Activated CD8-positive, alpha-beta T cell treated with anti-CD3 and anti-CD28 coated beads, Interleukin-2, amount 10 ng/mL, durations not matched to agents 7 days and 5 days (primary cell): ENCODE measurements at regions of chr12 and their contacts with region 1.

Region 1: DNA sequence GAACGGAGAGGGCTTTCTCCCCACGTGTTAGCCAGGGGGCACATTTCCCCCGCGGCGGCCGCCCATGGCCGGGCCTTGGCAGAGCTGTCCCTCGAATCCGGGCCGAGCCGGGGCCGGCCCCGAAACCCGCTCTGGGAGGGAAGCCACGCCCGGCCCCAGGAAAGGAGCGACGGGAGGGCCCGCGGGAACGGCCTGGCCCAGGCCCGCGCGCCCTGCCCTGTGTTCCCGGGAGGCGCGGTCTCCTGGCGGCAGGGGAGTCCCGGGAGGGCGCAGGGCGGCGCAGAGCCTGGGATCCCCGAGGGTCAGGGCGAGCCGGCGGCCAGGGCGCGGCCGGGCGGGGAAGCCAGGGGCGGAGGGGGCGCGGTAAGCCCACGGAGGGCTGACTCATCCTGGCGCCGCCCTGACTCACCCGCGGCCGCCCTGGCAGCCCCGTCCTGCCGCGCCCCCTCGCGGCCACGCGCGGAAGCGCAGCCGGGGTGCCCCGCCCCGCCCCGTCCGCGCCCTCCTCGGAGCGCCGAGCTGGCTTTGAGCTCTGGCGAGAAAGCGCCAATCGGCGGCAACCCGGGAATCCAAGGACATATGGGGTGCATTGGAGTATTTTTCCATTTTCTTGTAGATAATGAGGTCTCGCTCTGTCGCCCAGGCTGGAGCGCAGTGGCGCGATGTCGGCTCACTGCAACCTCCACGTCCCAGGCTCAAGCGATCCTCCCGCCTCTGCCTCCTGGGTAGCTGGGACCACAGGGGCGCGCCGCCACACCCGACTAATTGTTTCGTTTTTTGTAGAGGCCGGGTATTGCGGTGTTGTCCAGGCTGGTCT is 31.8 kb upstream of the PLEKHG6 start:
- DNase-seq: peak; percentile 84
- ATAC-seq: peak; percentile 97
- H3K4me3 Mint-ChIP-seq: peak overlapping the region; percentile 71
- H3K27ac Mint-ChIP-seq: no peak overlapping the region
- H3K4me1 Mint-ChIP-seq: peaks cover 9% of the 10 kb centered on the region
- H3K27me3 Mint-ChIP-seq: peaks cover 19% of the 10 kb centered on the region

Region 2: DNA sequence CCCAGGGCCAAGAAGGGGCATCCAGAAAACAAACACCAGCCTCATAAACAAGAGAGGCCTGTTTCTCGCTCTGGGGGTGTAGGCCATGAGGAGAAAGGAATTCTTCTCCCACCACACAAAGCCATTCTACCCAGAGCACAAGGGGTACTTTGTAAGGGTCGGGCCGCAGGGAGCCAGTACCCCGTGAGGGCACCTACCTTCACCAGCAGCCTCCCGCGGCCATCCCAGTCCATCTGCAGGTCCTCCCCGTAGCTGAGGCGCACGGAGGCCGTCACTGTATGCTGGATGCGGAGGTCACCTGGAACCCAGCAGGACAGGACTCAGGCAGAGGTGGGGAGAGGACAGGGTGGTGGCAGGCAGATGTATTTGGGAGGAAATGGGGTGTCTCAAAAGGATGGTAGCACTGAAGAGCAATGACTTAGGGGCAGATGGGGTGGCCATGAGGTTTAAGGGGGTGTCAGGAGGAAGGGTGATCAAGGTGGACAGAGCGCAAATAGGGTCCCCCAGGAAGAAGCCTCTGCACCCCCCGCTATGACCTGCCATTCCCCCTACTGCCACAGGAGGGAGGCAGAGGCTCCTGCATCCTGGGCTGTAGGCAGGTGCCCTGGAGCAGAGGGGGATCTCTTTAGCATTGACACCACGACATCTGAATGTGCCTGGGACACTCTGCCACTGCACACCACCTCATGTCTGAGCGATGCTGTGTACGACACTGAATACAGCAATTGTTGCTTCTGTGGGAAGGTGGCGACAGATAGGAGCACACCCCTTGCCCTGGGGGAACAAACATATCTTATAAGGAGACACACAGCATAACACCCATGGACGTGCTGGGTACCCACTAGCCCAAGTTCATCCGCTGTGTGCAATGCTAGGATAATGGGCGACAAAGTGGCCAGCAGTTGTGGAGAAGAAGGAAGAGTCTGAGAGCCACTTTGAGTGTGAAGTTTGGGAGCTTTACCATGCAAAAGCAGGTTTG is 215.6 kb before region 1 on chr12:
- CTCF ChIA-PET with region 1: interaction called, 20 read pairs
- POLR2A ChIA-PET with region 1: no interaction called
- DNase-seq: peak; percentile 73
- ATAC-seq: peak; percentile 84
- H3K4me3 Mint-ChIP-seq: no peak overlapping the region
- H3K27ac Mint-ChIP-seq: no peak overlapping the region
- H3K4me1 Mint-ChIP-seq: no peaks in the 10 kb centered on the region
- H3K27me3 Mint-ChIP-seq: peaks cover 6% of the 10 kb centered on the region

Region 3: DNA sequence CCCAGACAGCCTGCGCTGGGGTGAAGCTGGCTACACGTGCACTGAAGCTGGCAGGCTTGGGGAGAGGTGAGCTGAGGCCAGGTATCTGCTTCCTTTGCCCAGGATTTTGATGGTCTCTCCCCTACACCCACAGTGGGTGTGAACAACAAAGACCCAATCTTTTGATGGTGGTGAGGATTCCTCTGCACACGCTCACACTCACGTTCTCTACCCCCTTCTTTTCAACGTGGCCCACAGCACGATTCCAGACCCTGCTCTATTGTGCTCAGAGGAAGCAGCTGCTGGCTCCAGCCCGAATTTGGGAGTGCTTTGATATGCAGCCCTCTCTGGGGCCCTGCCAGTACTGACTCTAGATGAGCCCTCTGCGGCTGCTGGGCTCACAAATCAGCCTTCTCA is 73.5 kb before region 1 on chr12:
- CTCF ChIA-PET with region 1: interaction called, 21 read pairs
- POLR2A ChIA-PET with region 1: no interaction called
- DNase-seq: no peak
- ATAC-seq: no peak
- H3K4me3 Mint-ChIP-seq: no peak overlapping the region
- H3K27ac Mint-ChIP-seq: peak overlapping the region; percentile 11
- H3K4me1 Mint-ChIP-seq: peaks cover 23% of the 10 kb centered on the region
- H3K27me3 Mint-ChIP-seq: peaks cover 26% of the 10 kb centered on the region

Region 4: GRCh38 chr12:6230321-6231110 is 48.1 kb before region 1 on chr12:
- CTCF ChIA-PET with region 1: interaction called, 16 read pairs
- POLR2A ChIA-PET with region 1: no interaction called
- DNase-seq: peak; percentile 87
- ATAC-seq: peak; percentile 96
- H3K4me3 Mint-ChIP-seq: peak overlapping the region; percentile 51
- H3K27ac Mint-ChIP-seq: peak overlapping the region; percentile 92
- H3K4me1 Mint-ChIP-seq: peaks cover 38% of the 10 kb centered on the region
- H3K27me3 Mint-ChIP-seq: no peaks in the 10 kb centered on the region